Body of pancreas (tissue), 4 donors: ENCODE measurements at regions of chr17 and their contacts with region 1.

Region 1: GRCh38 chr17:76515274-76515949 is 14.2 kb upstream of the RHBDF2 start:
- DNase-seq: peak; percentile 47 to 80 (median 52)
- ATAC-seq: peak; percentile 62
- H3K4me3 ChIP-seq: no peak overlapping the region
- H3K27ac ChIP-seq: peak overlapping the region in 2 of 4 donors; percentile 43 to 63
- H3K4me1 ChIP-seq: peaks cover 7% of the 10 kb centered on the region
- H3K27me3 ChIP-seq: no peaks in the 10 kb centered on the region
- CTCF ChIP-seq: no peak
- POLR2A ChIP-seq: peak in 1 of 3 donors; percentile 33

Region 2: GRCh38 chr17:76307299-76307965 is 208.0 kb before region 1 on chr17:
- intact Hi-C with region 1: loop called (anchors 10 kb)
- DNase-seq: no peak
- ATAC-seq: peak; percentile 23
- H3K4me3 ChIP-seq: no peak overlapping the region
- H3K27ac ChIP-seq: no peak overlapping the region
- H3K4me1 ChIP-seq: no peaks in the 10 kb centered on the region
- H3K27me3 ChIP-seq: no peaks in the 10 kb centered on the region
- CTCF ChIP-seq: no peak
- POLR2A ChIP-seq: no peak

Region 3: DNA sequence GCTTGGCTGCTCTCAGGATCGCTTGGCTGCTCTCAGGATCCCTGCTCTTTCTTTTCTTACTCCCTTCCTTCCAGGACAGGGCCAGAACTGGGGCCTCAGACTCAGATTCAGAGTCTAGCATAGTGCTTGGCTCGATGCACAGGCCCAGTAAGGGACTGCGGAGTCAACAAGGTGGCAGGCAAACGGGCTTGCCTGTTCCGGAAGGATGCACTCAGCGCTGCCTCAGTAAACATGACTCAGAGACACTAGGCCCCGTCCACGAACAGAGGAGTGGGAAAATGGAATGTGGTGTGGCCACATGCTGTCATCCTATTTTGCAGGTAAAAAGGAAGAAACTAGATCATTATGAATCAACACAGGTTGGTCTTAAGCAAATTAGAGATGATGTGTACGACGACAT is 121.2 kb before region 1 on chr17:
- intact Hi-C with region 1: no loop called
- DNase-seq: no peak
- ATAC-seq: no peak
- H3K4me3 ChIP-seq: no peak overlapping the region
- H3K27ac ChIP-seq: no peak overlapping the region
- H3K4me1 ChIP-seq: peaks cover 1% of the 10 kb centered on the region
- H3K27me3 ChIP-seq: no peaks in the 10 kb centered on the region
- CTCF ChIP-seq: no peak
- POLR2A ChIP-seq: no peak

Region 4: GRCh38 chr17:76404976-76405563 is 110.3 kb before region 1 on chr17:
- intact Hi-C with region 1: loop called (anchors 5 kb)
- DNase-seq: peak in 1 of 4 donors; percentile 9
- ATAC-seq: no peak
- H3K4me3 ChIP-seq: no peak overlapping the region
- H3K27ac ChIP-seq: no peak overlapping the region
- H3K4me1 ChIP-seq: peaks cover 10% of the 10 kb centered on the region
- H3K27me3 ChIP-seq: no peaks in the 10 kb centered on the region
- CTCF ChIP-seq: no peak
- POLR2A ChIP-seq: no peak

Region 5: DNA sequence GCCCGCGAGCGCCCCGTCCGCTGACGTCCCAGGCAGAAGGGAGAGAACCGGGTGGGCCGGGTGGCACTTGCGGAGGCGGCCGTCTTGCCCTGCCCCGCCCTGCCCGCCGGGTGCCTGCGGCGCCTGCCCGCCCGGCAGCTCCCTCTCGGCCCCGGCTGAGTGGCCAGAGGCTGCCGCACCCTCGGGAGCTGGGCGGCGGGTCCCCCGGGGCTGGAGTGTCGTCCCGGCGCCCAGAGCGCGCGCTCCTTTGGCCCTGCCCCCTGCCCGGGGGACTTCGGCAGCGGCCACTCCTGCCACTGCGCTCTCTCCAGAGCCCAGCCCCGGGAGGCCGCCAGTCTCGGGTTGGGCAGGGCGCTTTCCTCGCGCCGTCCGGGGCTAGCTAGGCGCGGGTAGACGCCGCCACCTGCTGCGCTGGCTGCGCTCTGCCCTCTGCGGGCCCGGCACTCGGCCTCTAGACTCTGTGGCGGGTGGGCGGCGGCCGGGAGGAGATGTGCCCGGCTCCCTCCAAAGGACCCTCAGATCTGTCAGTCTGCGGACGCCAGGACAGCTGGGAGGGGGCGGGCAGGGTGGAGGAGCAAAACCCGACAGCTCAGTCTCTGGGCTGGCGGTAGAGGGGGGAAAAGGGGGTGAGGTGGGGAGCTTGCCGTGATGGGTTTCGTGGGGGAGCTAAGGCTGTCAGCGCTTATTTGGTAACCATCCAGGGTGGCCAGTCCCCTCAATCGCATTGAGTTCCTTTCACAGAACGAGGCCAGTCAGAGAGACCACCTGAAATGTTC is 70.6 kb after region 1 on chr17 and contains the start of gene ST6GALNAC2:
- intact Hi-C with region 1: no loop called
- DNase-seq: peak; percentile 68 to 80 (median 78)
- ATAC-seq: peak; percentile 90
- H3K4me3 ChIP-seq: peak within 1 kb of the TSS; percentile 32 to 80
- H3K27ac ChIP-seq: peak within 1 kb of the TSS in 3 of 4 donors; percentile 78 to 79 (median 78)
- H3K4me1 ChIP-seq: peaks cover 24% of the 10 kb centered on the region
- H3K27me3 ChIP-seq: no peaks in the 10 kb centered on the region
- CTCF ChIP-seq: peak; percentile 26 to 78 (median 60)
- POLR2A ChIP-seq: peak; percentile 50 to 64 (median 56)
- total RNA-seq, gene ST6GALNAC2: 6.9 to 10.1 TPM